ENCODE measurements at regions of chrX and their contacts with region 1.

Region 1: DNA sequence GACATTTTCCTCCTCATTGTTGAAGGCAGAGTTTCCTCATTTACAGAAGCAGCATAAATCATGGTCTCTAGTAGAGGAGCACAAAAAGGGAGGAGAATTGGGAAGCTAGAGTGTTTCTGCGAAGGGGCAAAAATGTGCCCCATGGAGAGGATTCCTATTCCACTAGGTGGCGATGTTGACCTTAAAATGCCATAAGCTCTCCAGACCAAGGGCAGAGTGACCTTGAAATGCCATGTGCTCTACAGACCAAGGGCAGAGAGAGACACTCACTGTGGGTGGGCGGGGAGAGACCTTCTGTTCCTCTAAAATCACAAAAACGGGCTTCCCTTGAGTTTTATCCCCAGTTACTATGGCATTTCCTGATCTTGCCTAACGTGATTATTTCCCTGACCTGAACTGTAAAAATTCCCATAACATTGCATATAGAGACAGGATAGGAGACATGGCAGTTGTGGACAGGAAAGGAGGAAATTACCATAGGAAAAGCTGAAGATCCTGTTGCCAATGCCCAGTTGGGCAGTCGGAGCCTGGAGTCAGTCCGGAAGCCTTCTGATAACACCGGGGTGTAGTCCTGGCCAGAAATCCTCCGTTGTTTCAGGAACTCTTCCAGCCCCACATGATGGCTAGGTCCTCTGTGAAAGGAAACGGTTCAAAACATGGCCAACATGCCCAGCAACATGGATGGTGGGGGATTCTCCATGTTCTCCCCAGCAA is 567.7 kb downstream of the MAGEB5 start:
- DNase-seq: peak; percentile 65
- ATAC-seq: peak; percentile 92
- H3K4me3 ChIP-seq: no peak overlapping the region
- H3K27ac ChIP-seq: no peak overlapping the region
- H3K4me1 ChIP-seq: no peaks in the 10 kb centered on the region
- H3K27me3 ChIP-seq: no peaks in the 10 kb centered on the region
- CTCF ChIP-seq: peak; percentile 74
- EP300 ChIP-seq: no peak
- POLR2A ChIP-seq: no peak
- RAD21 ChIP-seq: peak; percentile 62

Region 2: GRCh38 chrX:26651755-26652154 is 131.9 kb before region 1 on chrX:
- CTCF ChIA-PET with region 1: no interaction called
- POLR2A ChIA-PET with region 1: no interaction called
- in situ Hi-C with region 1: no loop called
- intact Hi-C with region 1: no loop called
- DNase-seq: no peak
- ATAC-seq: no peak
- H3K4me3 ChIP-seq: no peak overlapping the region
- H3K27ac ChIP-seq: no peak overlapping the region
- H3K4me1 ChIP-seq: no peaks in the 10 kb centered on the region
- H3K27me3 ChIP-seq: no peaks in the 10 kb centered on the region
- CTCF ChIP-seq: no peak
- EP300 ChIP-seq: no peak
- POLR2A ChIP-seq: no peak
- RAD21 ChIP-seq: no peak

Region 3: GRCh38 chrX:26918633-26919032 is 135.0 kb after region 1 on chrX:
- CTCF ChIA-PET with region 1: no interaction called
- POLR2A ChIA-PET with region 1: no interaction called
- in situ Hi-C with region 1: no loop called
- intact Hi-C with region 1: loop called (anchors 2 kb)
- DNase-seq: peak; percentile 23
- ATAC-seq: peak; percentile 86
- H3K4me3 ChIP-seq: no peak overlapping the region
- H3K27ac ChIP-seq: no peak overlapping the region
- H3K4me1 ChIP-seq: no peaks in the 10 kb centered on the region
- H3K27me3 ChIP-seq: no peaks in the 10 kb centered on the region
- CTCF ChIP-seq: peak; percentile 65
- EP300 ChIP-seq: no peak
- POLR2A ChIP-seq: no peak
- RAD21 ChIP-seq: no peak

Region 4: DNA sequence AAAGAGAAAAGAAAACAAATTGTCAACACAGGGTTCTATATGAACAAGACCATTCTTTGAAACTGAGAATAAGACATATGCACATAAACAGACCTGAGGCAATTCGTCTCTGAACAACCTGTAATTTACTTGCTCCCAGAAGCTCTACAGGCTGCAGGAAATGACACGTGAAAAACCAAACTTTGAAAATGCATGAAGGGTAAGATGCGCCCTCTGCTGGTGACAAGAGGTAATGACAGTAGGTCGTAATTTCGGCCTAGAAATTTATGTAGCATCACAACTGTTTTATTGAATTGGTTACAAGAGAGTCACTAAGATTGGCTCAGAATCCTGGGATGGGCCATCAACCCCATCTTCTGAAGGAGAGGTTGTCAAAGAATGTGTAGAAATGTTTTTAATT is 403.0 kb after region 1 on chrX:
- CTCF ChIA-PET with region 1: interaction called, 19 read pairs
- POLR2A ChIA-PET with region 1: no interaction called
- in situ Hi-C with region 1: loop called (anchors 25 kb)
- intact Hi-C with region 1: no loop called
- DNase-seq: peak; percentile 13
- ATAC-seq: no peak
- H3K4me3 ChIP-seq: no peak overlapping the region
- H3K27ac ChIP-seq: no peak overlapping the region
- H3K4me1 ChIP-seq: no peaks in the 10 kb centered on the region
- H3K27me3 ChIP-seq: no peaks in the 10 kb centered on the region
- CTCF ChIP-seq: peak; percentile 73
- EP300 ChIP-seq: no peak
- POLR2A ChIP-seq: no peak
- RAD21 ChIP-seq: peak; percentile 28; the same call in 1 of the 2 replicates